HEK293 (cell line): ENCODE measurements at regions of chr14 and their contacts with region 1.

Region 1: DNA sequence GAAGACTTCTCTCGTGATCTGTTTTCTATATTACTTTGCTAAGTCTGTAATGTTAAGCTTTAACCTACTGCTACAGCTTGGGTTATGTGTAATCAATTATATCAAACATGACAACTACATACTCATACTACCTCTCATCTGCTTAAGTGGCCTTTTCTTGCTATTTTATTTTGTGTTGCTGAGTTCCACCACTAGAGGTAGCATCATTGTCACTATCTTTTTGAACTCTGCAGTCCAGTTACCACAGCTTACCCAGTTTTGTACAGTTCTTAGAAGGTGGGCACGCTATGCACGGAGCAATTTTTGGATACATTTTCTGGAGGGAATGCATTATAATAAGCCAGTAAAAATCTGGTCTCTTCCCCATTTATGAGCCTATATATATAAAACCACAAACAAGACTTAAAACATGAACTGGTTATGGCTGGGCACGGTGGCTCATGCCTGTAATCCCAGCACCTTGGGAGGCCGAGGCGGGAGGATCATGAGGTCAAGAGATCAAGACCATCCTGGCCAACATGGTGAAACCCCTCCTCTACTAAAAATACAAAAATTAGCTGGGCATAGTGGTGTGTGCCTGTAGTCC is 48.5 kb downstream of the SAV1 start:
- H3K4me3 ChIP-seq: no peak overlapping the region
- H3K27ac ChIP-seq: no peak overlapping the region
- H3K4me1 ChIP-seq: peaks cover 11% of the 10 kb centered on the region
- CTCF ChIP-seq: peak; percentile 29; the same call in 1 of the 2 replicates

Region 2: DNA sequence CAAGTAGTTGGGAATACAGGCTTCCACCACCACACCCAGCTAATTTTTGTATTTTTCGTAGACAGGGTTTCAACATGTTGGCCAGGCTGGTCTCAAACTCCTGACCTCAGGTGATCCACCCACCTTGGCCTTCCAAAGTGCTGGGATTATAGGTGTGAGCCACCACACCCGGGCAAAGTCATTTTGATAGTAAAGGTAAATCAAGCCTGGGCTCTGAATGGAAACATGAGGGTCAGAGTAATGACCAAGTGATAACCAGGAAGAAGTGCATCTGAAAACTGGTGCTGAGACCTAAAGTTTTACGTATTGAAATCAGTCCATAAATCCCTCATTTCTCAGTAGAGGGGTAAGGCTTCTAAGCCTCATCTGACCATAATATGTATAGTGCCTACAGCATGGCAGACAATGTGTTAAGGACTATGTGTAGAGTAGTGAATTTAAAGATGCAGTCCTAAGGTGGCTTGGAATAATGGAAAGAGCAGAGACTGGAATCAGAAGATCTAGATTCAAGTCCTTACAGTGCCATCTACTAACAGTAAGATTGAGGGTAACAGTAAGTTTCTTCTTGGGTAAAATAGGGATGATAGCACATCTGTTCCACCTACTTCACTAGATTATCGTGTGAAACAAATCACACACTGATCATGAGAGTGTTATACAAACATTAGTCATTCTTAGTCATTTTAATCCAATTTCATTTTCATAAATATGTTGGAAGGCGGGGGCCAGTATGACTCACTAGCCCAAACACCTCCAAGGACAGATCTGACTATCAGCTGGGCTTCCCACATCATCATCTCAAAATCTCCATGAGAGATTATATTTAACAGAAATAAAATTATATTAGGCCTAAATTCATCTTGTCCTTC is 98.5 kb before region 1 on chr14:
- CTCF ChIA-PET with region 1: no interaction called
- POLR2A ChIA-PET with region 1: no interaction called
- H3K4me3 ChIP-seq: no peak overlapping the region
- H3K27ac ChIP-seq: peak overlapping the region; percentile 34; the same call in 1 of the 2 replicates
- H3K4me1 ChIP-seq: peaks cover 9% of the 10 kb centered on the region
- CTCF ChIP-seq: no peak

Region 3: GRCh38 chr14:50599700-50600444 is 19.8 kb before region 1 on chr14:
- CTCF ChIA-PET with region 1: interaction called, 12 read pairs
- POLR2A ChIA-PET with region 1: no interaction called
- H3K4me3 ChIP-seq: no peak overlapping the region
- H3K27ac ChIP-seq: peak overlapping the region; percentile 50; the same call in 1 of the 2 replicates
- H3K4me1 ChIP-seq: peaks cover 6% of the 10 kb centered on the region
- CTCF ChIP-seq: no peak

Region 4: DNA sequence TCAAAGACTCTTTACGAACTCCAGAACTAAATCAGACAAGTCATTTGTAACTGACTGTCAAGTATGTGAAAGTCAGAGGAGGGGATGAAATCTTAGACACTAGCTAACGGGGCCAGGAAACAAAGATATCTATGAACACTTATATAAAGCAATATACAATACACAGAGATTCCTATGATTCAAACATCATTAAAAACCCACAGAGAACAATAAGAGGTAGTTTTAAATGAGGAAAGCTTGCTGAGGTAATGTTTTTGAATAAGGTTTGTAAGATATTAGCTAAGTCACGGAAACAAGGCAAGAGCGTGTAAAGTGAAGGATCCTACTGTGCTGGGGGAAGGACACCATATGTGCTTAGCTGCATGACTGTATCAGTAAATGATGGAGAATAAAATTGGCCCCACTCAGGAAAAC is 11.8 kb after region 1 on chr14:
- CTCF ChIA-PET with region 1: interaction called, 14 read pairs
- POLR2A ChIA-PET with region 1: no interaction called
- H3K4me3 ChIP-seq: no peak overlapping the region
- H3K27ac ChIP-seq: no peak overlapping the region
- H3K4me1 ChIP-seq: no peaks in the 10 kb centered on the region
- CTCF ChIP-seq: no peak